ENCODE measurements at regions of chr12 and their contacts with region 1.

Region 1: DNA sequence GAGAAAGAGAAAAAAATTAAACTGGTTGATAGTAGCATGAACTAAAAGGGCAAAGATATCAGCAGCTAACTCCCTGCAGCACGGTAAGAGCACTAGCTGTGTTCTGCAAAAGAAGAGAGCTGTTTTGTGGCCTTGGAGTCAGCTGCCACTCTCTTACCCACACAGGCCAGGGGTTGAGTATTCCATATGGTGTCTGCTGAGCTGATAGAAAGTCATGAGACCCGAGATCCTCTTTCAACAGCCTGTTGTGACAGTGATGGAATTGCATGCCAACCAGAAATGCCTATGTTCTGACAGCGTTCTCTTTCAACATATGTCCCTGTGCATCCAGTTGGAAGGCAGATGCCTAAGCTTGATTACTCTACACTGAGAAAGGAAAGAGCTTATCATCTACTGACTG is 39.9 kb downstream of the TMTC1 start:
- DNase-seq: no peak
- ATAC-seq: peak; percentile 31; the same call in 2 of the 3 replicates
- H3K4me3 ChIP-seq: no peak overlapping the region
- H3K27ac ChIP-seq: no peak overlapping the region
- H3K4me1 ChIP-seq: no peaks in the 10 kb centered on the region
- H3K27me3 ChIP-seq: no peaks in the 10 kb centered on the region
- CTCF ChIP-seq: no peak
- EP300 ChIP-seq: no peak
- POLR2A ChIP-seq: no peak
- RAD21 ChIP-seq: no peak

Region 2: GRCh38 chr12:29725587-29726320 is 18.0 kb before region 1 on chr12:
- CTCF ChIA-PET with region 1: interaction called, 5 read pairs
- POLR2A ChIA-PET with region 1: interaction called, 7 read pairs
- RAD21 ChIA-PET with region 1: interaction called, 5 read pairs
- SMC1A ChIA-PET with region 1: interaction called, 18 read pairs
- in situ Hi-C with region 1: no loop called
- intact Hi-C with region 1: no loop called
- DNase-seq: peak; percentile 54
- ATAC-seq: peak; percentile 91
- H3K4me3 ChIP-seq: no peak overlapping the region
- H3K27ac ChIP-seq: no peak overlapping the region
- H3K4me1 ChIP-seq: no peaks in the 10 kb centered on the region
- H3K27me3 ChIP-seq: no peaks in the 10 kb centered on the region
- CTCF ChIP-seq: no peak
- EP300 ChIP-seq: 0 out of 4 replicates have a peak, but pooled peaks of 1 of the 2 experiments have one; percentile 12
- POLR2A ChIP-seq: no peak
- RAD21 ChIP-seq: no peak

Region 3: GRCh38 chr12:29733060-29733459 is 10.7 kb before region 1 on chr12:
- CTCF ChIA-PET with region 1: interaction called, 5 read pairs
- POLR2A ChIA-PET with region 1: interaction called, 5 read pairs
- RAD21 ChIA-PET with region 1: interaction called, 5 read pairs
- SMC1A ChIA-PET with region 1: interaction called, 26 read pairs
- in situ Hi-C with region 1: no loop called
- intact Hi-C with region 1: no loop called
- DNase-seq: no peak
- ATAC-seq: peak; percentile 34; the same call in 1 of the 3 replicates
- H3K4me3 ChIP-seq: no peak overlapping the region
- H3K27ac ChIP-seq: no peak overlapping the region
- H3K4me1 ChIP-seq: no peaks in the 10 kb centered on the region
- H3K27me3 ChIP-seq: no peaks in the 10 kb centered on the region
- CTCF ChIP-seq: no peak
- EP300 ChIP-seq: no peak
- POLR2A ChIP-seq: no peak
- RAD21 ChIP-seq: no peak

Region 4: DNA sequence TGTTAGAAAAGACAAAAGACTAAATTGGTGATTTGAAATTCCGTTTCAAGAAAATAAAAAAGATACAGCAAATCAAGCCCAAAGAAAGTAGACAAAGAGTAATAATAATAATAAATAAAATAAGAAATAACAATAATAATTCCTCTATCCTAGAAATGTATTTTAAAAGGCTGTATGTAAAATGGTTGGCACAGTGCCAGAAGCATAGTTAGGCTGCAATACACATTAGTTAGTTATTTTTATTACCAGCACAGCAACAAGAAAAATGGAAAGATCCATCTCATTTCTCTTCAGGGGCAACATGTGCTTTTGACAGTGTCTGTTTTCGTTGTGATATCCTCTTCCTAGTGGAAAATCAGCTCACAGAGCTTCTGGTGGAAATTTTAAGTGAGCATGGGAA is 214.0 kb after region 1 on chr12:
- CTCF ChIA-PET with region 1: no interaction called
- POLR2A ChIA-PET with region 1: no interaction called
- RAD21 ChIA-PET with region 1: no interaction called
- SMC1A ChIA-PET with region 1: no interaction called
- in situ Hi-C with region 1: no loop called
- intact Hi-C with region 1: no loop called
- DNase-seq: no peak
- ATAC-seq: no peak
- H3K4me3 ChIP-seq: no peak overlapping the region
- H3K27ac ChIP-seq: no peak overlapping the region
- H3K4me1 ChIP-seq: no peaks in the 10 kb centered on the region
- H3K27me3 ChIP-seq: no peaks in the 10 kb centered on the region
- CTCF ChIP-seq: no peak
- EP300 ChIP-seq: no peak
- POLR2A ChIP-seq: no peak
- RAD21 ChIP-seq: no peak

Region 5: GRCh38 chr12:29990971-29991370 is 247.2 kb after region 1 on chr12:
- CTCF ChIA-PET with region 1: no interaction called
- POLR2A ChIA-PET with region 1: no interaction called
- RAD21 ChIA-PET with region 1: no interaction called
- SMC1A ChIA-PET with region 1: no interaction called
- in situ Hi-C with region 1: no loop called
- intact Hi-C with region 1: no loop called
- DNase-seq: no peak
- ATAC-seq: no peak
- H3K4me3 ChIP-seq: no peak overlapping the region
- H3K27ac ChIP-seq: no peak overlapping the region
- H3K4me1 ChIP-seq: no peaks in the 10 kb centered on the region
- H3K27me3 ChIP-seq: no peaks in the 10 kb centered on the region
- CTCF ChIP-seq: no peak
- EP300 ChIP-seq: no peak
- POLR2A ChIP-seq: no peak
- RAD21 ChIP-seq: no peak